ENCODE measurements at regions of chr2 and their contacts with region 1.

Region 1: GRCh38 chr2:216404010-216404618 is 8.2 kb upstream of the SMARCAL1 start:
- DNase-seq: peak; percentile 63
- ATAC-seq: peak; percentile 77
- H3K4me3 ChIP-seq: no peak overlapping the region
- H3K27ac ChIP-seq: no peak overlapping the region
- H3K4me1 ChIP-seq: no peaks in the 10 kb centered on the region
- H3K27me3 ChIP-seq: peaks cover 4% of the 10 kb centered on the region; the same call in 1 of the 2 replicates
- CTCF ChIP-seq: peak; percentile 69

Region 2: GRCh38 chr2:216222650-216223352 is 181.3 kb before region 1 on chr2:
- CTCF ChIA-PET with region 1: no interaction called
- POLR2A ChIA-PET with region 1: no interaction called
- intact Hi-C with region 1: loop called (anchors 2 kb)
- DNase-seq: peak; percentile 36
- ATAC-seq: peak; percentile 55
- H3K4me3 ChIP-seq: no peak overlapping the region
- H3K27ac ChIP-seq: no peak overlapping the region; the same call in 1 of the 2 replicates
- H3K4me1 ChIP-seq: peaks cover 29% of the 10 kb centered on the region
- H3K27me3 ChIP-seq: no peaks in the 10 kb centered on the region
- CTCF ChIP-seq: peak; percentile 62

Region 3: GRCh38 chr2:216283038-216283900 is 120.8 kb before region 1 on chr2:
- CTCF ChIA-PET with region 1: no interaction called
- POLR2A ChIA-PET with region 1: no interaction called
- intact Hi-C with region 1: no loop called
- DNase-seq: peak; percentile 17
- ATAC-seq: 0 out of 2 replicates have a peak, but pooled peaks have one; percentile 29
- H3K4me3 ChIP-seq: no peak overlapping the region
- H3K27ac ChIP-seq: no peak overlapping the region
- H3K4me1 ChIP-seq: no peaks in the 10 kb centered on the region
- H3K27me3 ChIP-seq: no peaks in the 10 kb centered on the region
- CTCF ChIP-seq: peak; percentile 51

Region 4: GRCh38 chr2:216328347-216328746 is 75.8 kb before region 1 on chr2:
- CTCF ChIA-PET with region 1: no interaction called
- POLR2A ChIA-PET with region 1: no interaction called
- intact Hi-C with region 1: loop called (anchors 1 kb)
- DNase-seq: peak; percentile 58
- ATAC-seq: peak; percentile 82
- H3K4me3 ChIP-seq: no peak overlapping the region
- H3K27ac ChIP-seq: no peak overlapping the region
- H3K4me1 ChIP-seq: no peaks in the 10 kb centered on the region
- H3K27me3 ChIP-seq: no peaks in the 10 kb centered on the region
- CTCF ChIP-seq: peak; percentile 62

Region 5: DNA sequence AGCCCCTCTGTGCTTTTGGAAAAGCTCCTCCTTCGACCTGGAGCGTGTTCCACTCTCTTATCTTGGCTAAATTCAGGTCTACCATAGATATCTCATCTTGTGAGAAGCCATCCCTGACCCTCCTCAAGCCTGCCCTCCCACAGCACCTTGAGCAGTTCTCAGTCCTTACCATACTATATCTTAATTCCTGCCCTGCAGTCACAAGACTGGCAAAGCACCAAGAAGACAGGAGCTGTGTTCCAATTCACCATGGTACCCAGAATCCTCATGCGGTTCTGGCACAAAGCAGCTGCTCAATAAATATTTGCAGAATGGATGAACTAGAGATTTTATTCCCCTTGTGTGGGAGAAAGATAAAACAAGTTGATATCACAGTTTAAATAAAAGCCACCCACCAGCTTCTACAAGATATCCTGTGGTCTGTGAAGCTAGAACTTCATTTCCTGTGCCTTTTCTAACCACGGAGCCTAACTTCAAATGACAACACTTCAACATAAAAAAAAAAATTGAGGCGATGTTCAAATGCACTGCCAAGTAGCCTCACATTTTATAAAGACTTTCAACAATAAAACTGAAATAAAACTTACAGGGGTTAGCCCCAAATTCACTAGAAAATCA is 51.4 kb before region 1 on chr2:
- CTCF ChIA-PET with region 1: no interaction called
- POLR2A ChIA-PET with region 1: no interaction called
- intact Hi-C with region 1: no loop called
- DNase-seq: no peak
- ATAC-seq: no peak
- H3K4me3 ChIP-seq: no peak overlapping the region
- H3K27ac ChIP-seq: no peak overlapping the region
- H3K4me1 ChIP-seq: peaks cover 20% of the 10 kb centered on the region
- H3K27me3 ChIP-seq: no peaks in the 10 kb centered on the region
- CTCF ChIP-seq: no peak

Region 6: GRCh38 chr2:216426938-216427337 is 22.8 kb after region 1 on chr2:
- CTCF ChIA-PET with region 1: no interaction called
- POLR2A ChIA-PET with region 1: no interaction called
- intact Hi-C with region 1: no loop called
- DNase-seq: peak; percentile 82
- ATAC-seq: peak; percentile 97
- H3K4me3 ChIP-seq: no peak overlapping the region
- H3K27ac ChIP-seq: no peak overlapping the region
- H3K4me1 ChIP-seq: peaks cover 12% of the 10 kb centered on the region
- H3K27me3 ChIP-seq: no peaks in the 10 kb centered on the region
- CTCF ChIP-seq: no peak

Measured in PC-3 (cell line).